PC-3 (cell line): ENCODE measurements at regions of chr2 and their contacts with region 1.

Region 1: GRCh38 chr2:65227425-65228262 is at the start of gene ACTR2:
- DNase-seq: peak; percentile 96
- ATAC-seq: peak; percentile 90
- H3K4me3 ChIP-seq: peak within 1 kb of the TSS; percentile 87
- H3K27ac ChIP-seq: peak within 1 kb of the TSS; percentile 87
- H3K4me1 ChIP-seq: peaks cover 36% of the 10 kb centered on the region
- H3K27me3 ChIP-seq: no peaks in the 10 kb centered on the region
- CTCF ChIP-seq: no peak
- total RNA-seq, gene ACTR2: 56.7 and 67.2 TPM in 2 replicates

Region 2: GRCh38 chr2:64543008-64543697 is 684.5 kb before region 1 on chr2:
- CTCF ChIA-PET with region 1: no interaction called
- POLR2A ChIA-PET with region 1: interaction called, 16 read pairs
- intact Hi-C with region 1: no loop called
- DNase-seq: peak; percentile 87
- ATAC-seq: peak; percentile 66
- H3K4me3 ChIP-seq: no peak overlapping the region; the same call in 1 of the 2 replicates
- H3K27ac ChIP-seq: peak overlapping the region; percentile 84
- H3K4me1 ChIP-seq: peaks cover 64% of the 10 kb centered on the region
- H3K27me3 ChIP-seq: no peaks in the 10 kb centered on the region
- CTCF ChIP-seq: no peak

Region 3: GRCh38 chr2:64914735-64915509 is 312.7 kb before region 1 on chr2:
- CTCF ChIA-PET with region 1: no interaction called
- POLR2A ChIA-PET with region 1: interaction called, 15 read pairs
- intact Hi-C with region 1: no loop called
- DNase-seq: no peak
- ATAC-seq: no peak
- H3K4me3 ChIP-seq: no peak overlapping the region
- H3K27ac ChIP-seq: no peak overlapping the region
- H3K4me1 ChIP-seq: no peaks in the 10 kb centered on the region; the same call in 1 of the 2 replicates
- H3K27me3 ChIP-seq: no peaks in the 10 kb centered on the region
- CTCF ChIP-seq: no peak

Region 4: DNA sequence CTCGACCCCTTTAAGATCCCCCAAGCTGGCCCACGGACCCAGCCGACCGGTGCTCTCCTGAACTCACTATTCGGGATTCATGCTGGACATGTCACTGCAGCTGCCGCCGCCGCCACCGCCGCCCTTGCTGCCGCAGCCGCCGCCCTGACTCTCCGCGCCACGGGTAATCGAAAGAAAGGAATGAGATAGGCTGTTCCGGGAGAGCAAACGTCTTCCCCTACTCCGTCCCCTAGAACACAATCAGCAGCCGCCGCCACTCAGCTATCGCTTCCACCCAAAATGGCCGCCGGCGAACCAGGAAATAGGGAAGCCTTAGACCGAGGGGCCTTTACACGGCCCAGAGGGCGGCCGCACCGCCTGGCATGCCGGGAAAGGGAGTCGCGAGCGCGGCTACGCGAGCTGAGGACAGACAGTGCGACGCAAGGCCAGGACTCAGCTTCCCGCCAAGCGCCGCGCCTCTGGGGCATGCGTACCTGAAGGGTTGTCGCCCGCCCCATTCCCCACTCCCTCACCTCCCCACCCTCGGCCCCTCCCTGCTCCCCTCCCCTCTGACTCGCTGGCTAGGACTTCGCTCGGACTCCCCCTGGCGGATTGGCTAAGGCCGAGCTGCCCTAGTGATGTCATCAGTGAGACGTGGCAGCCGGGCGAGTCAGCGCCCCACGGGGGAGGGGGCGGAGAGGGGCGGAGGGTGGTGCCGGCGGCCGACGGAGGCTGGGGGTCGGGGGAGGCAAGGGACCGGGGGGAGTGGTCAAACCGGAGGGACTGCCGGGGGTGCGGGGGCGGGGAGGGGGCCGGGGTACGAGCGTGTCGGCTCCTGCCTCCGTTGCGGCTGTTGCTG is 97.6 kb before region 1 on chr2 and contains the start of gene RAB1A:
- CTCF ChIA-PET with region 1: no interaction called
- POLR2A ChIA-PET with region 1: interaction called, 22 read pairs
- intact Hi-C with region 1: loop called (anchors 2 kb)
- DNase-seq: peak; percentile 99
- ATAC-seq: peak; percentile 97
- H3K4me3 ChIP-seq: peak within 1 kb of the TSS; percentile 100
- H3K27ac ChIP-seq: peak within 1 kb of the TSS; percentile 78
- H3K4me1 ChIP-seq: peaks cover 19% of the 10 kb centered on the region
- H3K27me3 ChIP-seq: no peaks in the 10 kb centered on the region
- CTCF ChIP-seq: peak; percentile 15; the same call in 1 of the 2 replicates
- total RNA-seq, gene RAB1A: 96.9 and 97.3 TPM in 2 replicates

Region 5: DNA sequence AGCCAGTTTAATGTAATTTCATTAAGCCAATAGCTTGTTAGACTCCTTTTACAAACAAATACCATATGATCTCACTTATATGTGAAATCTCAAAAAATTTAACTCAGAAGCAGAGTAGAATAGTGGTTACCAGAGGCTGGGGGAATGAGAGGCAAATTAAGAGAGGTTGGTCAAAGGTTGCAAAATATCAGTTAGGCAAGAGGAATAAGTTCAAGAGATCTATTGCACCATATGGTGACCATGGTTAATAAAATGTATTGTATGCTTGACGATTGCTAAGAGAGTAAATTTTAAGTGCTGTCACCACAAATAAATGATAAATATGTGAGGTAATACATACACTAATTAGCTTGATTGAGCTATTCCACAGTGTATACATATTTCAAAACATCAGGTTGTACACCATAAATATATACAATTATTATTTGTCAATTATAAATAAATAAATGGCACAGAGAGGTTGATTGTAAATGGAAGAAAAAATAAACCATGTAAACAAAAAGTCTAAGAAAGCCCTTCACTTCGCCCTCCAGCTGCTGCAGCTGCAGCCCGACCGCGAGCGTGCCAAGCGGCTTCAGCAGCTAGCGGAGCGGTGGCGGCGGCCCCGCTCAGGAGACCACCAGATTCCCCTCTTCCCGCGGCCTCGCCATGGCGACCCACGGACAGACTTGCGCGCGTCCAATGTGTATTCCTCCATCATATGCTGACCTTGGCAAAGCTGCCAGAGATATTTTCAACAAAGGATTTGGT is 23.0 kb before region 1 on chr2:
- CTCF ChIA-PET with region 1: no interaction called
- POLR2A ChIA-PET with region 1: no interaction called
- intact Hi-C with region 1: no loop called
- DNase-seq: no peak
- ATAC-seq: no peak
- H3K4me3 ChIP-seq: no peak overlapping the region
- H3K27ac ChIP-seq: no peak overlapping the region
- H3K4me1 ChIP-seq: no peaks in the 10 kb centered on the region
- H3K27me3 ChIP-seq: no peaks in the 10 kb centered on the region
- CTCF ChIP-seq: no peak

Region 6: GRCh38 chr2:65240657-65241056 is 13.0 kb after region 1 on chr2:
- CTCF ChIA-PET with region 1: interaction called, 12 read pairs
- POLR2A ChIA-PET with region 1: no interaction called
- intact Hi-C with region 1: no loop called
- DNase-seq: no peak
- ATAC-seq: peak; percentile 64
- H3K4me3 ChIP-seq: no peak overlapping the region
- H3K27ac ChIP-seq: no peak overlapping the region
- H3K4me1 ChIP-seq: peaks cover 5% of the 10 kb centered on the region; the same call in 1 of the 2 replicates
- H3K27me3 ChIP-seq: no peaks in the 10 kb centered on the region
- CTCF ChIP-seq: no peak

Region 7: DNA sequence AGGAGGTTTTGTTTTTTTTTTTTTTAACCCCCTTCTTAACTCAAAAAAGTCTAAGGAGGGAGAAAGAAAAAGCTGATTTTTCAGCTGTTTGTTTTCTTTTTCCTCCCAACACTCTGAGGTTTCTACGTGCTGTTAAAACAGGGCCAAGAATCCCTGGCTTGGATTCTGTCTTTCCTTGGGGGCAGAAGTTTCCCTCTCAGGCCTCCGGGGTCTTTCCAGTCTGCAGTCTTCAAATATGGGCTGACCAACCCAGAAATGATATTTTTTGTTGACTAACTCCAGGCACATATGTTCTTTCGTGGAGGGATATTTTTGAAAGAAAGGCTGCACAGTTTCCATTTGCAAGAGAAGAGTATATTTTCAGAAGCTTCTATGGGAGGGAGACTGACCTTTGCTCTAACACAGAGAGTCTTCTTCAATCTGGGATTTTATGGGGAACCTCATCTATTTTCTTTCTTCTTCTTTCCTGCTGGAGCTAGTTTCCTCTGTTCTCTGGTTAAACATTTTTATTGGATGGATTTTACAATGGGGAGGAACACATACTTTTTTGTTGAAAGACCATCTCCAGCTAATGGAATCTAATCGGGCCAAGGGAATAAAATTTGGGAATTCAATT is 298.1 kb after region 1 on chr2:
- CTCF ChIA-PET with region 1: no interaction called
- POLR2A ChIA-PET with region 1: interaction called, 21 read pairs
- intact Hi-C with region 1: no loop called
- DNase-seq: no peak
- ATAC-seq: no peak
- H3K4me3 ChIP-seq: no peak overlapping the region
- H3K27ac ChIP-seq: no peak overlapping the region
- H3K4me1 ChIP-seq: peaks cover 8% of the 10 kb centered on the region
- H3K27me3 ChIP-seq: no peaks in the 10 kb centered on the region
- CTCF ChIP-seq: no peak